Prostate gland (tissue), 2 donors: ENCODE measurements at regions of chr4 and their contacts with region 1.

Region 1: DNA sequence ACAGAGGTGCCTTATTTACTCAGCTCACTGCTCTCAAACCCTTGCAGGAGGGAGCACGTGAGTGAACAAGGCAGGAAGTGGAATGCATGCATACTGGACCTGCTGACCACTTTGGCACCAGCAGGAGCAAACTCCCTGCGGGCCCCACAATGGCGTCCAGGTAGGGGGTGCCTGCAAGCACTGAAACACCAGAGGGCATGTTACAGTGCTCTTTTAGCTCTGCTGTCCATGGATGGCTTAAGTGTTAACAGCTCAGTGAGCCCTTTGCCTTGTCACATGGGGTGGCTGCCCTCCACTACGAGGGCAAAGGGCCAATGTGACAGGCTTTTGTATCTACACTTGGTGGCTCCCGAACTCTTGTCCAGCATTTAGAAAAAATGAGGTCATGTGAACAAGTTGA is 199.5 kb upstream of the UGT8 start:
- DNase-seq: no peak
- H3K4me3 ChIP-seq: no peak overlapping the region
- H3K27ac ChIP-seq: no peak overlapping the region
- H3K4me1 ChIP-seq: no peaks in the 10 kb centered on the region
- H3K27me3 ChIP-seq: peaks cover 3% of the 10 kb centered on the region
- CTCF ChIP-seq: no peak
- POLR2A ChIP-seq: no peak

Region 2: DNA sequence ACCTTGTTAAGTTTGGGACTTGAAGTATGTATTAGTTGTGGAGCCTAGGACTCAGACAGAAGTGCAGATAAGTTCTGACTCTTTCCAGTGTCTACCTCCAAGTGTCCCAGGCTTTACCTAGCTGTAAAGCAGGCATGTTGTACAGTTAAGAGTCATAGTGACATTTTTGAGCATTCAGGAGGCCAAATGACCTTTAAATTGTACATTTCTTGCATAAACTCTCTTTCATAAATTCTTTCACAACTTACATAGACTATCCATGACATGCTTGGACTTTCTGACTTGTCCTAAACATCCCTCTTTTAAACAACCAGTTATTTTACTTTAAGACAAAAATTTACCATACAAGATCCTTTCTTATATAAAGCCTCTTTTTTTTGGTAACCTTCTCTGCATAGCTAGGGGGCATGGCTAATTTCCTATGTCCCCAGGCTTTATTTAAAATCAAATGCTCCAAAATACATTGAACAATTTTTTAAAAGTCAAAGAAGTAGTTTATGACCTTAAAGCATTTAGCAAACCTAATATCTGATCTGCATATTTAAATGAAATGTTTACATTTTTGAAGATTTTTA is 159.4 kb after region 1 on chr4:
- intact Hi-C with region 1: no loop called
- DNase-seq: no peak
- H3K4me3 ChIP-seq: no peak overlapping the region
- H3K27ac ChIP-seq: no peak overlapping the region
- H3K4me1 ChIP-seq: no peaks in the 10 kb centered on the region
- H3K27me3 ChIP-seq: no peaks in the 10 kb centered on the region
- CTCF ChIP-seq: no peak
- POLR2A ChIP-seq: no peak

Region 3: GRCh38 chr4:114694770-114695169 is 295.7 kb after region 1 on chr4:
- intact Hi-C with region 1: loop called (anchors 10 kb)
- DNase-seq: no peak
- H3K4me3 ChIP-seq: no peak overlapping the region
- H3K27ac ChIP-seq: no peak overlapping the region
- H3K4me1 ChIP-seq: no peaks in the 10 kb centered on the region
- H3K27me3 ChIP-seq: no peaks in the 10 kb centered on the region
- CTCF ChIP-seq: peak in 3 of 4 experiments; percentile 47 to 72 (median 67)
- POLR2A ChIP-seq: no peak